ENCODE measurements at regions of chr1 and their contacts with region 1.

Region 1: GRCh38 chr1:197180252-197180878 is 33.9 kb upstream of the ASPM start:
- DNase-seq: no peak
- H3K4me3 ChIP-seq: no peak overlapping the region
- H3K27ac ChIP-seq: no peak overlapping the region
- H3K4me1 ChIP-seq: peaks cover 0 to 5% of the 10 kb centered on the region in 2 donors
- H3K27me3 ChIP-seq: no peaks in the 10 kb centered on the region
- CTCF ChIP-seq: peak; percentile 37 to 69 (median 49)
- POLR2A ChIP-seq: no peak

Region 2: GRCh38 chr1:197339106-197340060 is 159.0 kb after region 1 on chr1:
- intact Hi-C with region 1: loop called in 1 of 2 experiments (anchors 10 kb)
- DNase-seq: no peak
- H3K4me3 ChIP-seq: no peak overlapping the region
- H3K27ac ChIP-seq: no peak overlapping the region
- H3K4me1 ChIP-seq: peaks cover 0 to 11% of the 10 kb centered on the region in 2 donors
- H3K27me3 ChIP-seq: no peaks in the 10 kb centered on the region
- CTCF ChIP-seq: no peak
- POLR2A ChIP-seq: no peak

Measured in adrenal gland (tissue), 19 donors.